CD14-positive monocyte (primary cell): ENCODE measurements at regions of chr5 and their contacts with region 1.

Region 1: GRCh38 chr5:543825-544674 is 19.8 kb upstream of the SLC9A3 start:
- DNase-seq: peak; percentile 88 to 93 (median 92)
- H3K4me3 ChIP-seq: peak overlapping the region in 1 of 3 experiments; percentile 26
- H3K4me3 Mint-ChIP-seq: peak overlapping the region; percentile 37 to 63
- H3K27ac ChIP-seq: peak overlapping the region; percentile 15 to 27
- H3K27ac Mint-ChIP-seq: peak overlapping the region in 6 of 7 donors; percentile 67 to 87 (median 82)
- H3K4me1 ChIP-seq: peaks cover 19 to 25% of the 10 kb centered on the region in 2 donors
- H3K4me1 Mint-ChIP-seq: peaks cover 31% of the 10 kb centered on the region
- H3K27me3 ChIP-seq: peaks cover 1 to 79% of the 10 kb centered on the region in 2 donors
- H3K27me3 Mint-ChIP-seq: peaks cover 51 to 86% (median 65%) of the 10 kb centered on the region in 3 donors
- CTCF ChIP-seq: no peak

Region 2: GRCh38 chr5:472656-473553 is 71.1 kb before region 1 on chr5:
- intact Hi-C with region 1: loop called in 1 of 2 experiments (anchors 10 kb)
- DNase-seq: peak; percentile 76 to 87 (median 77)
- H3K4me3 ChIP-seq: peak overlapping the region; percentile 51 to 87 (median 59)
- H3K4me3 Mint-ChIP-seq: peak overlapping the region; percentile 70 to 72
- H3K27ac ChIP-seq: peak overlapping the region in 1 of 2 donors; percentile 61
- H3K27ac Mint-ChIP-seq: no peak overlapping the region
- H3K4me1 ChIP-seq: peaks cover 22 to 40% of the 10 kb centered on the region in 2 donors
- H3K4me1 Mint-ChIP-seq: peaks cover 18% of the 10 kb centered on the region
- H3K27me3 ChIP-seq: peaks cover 4 to 31% of the 10 kb centered on the region in 2 donors
- H3K27me3 Mint-ChIP-seq: peaks cover 32 to 44% (median 43%) of the 10 kb centered on the region in 3 donors
- CTCF ChIP-seq: no peak

Region 3: GRCh38 chr5:485946-486491 is 58.0 kb before region 1 on chr5:
- intact Hi-C with region 1: no loop called
- DNase-seq: peak; percentile 53 to 72 (median 57)
- H3K4me3 ChIP-seq: no peak overlapping the region
- H3K4me3 Mint-ChIP-seq: peak overlapping the region in 1 of 2 donors; percentile 48
- H3K27ac ChIP-seq: no peak overlapping the region
- H3K27ac Mint-ChIP-seq: peak overlapping the region in 6 of 7 donors; percentile 13 to 85 (median 35)
- H3K4me1 ChIP-seq: peaks cover 2 to 12% of the 10 kb centered on the region in 2 donors
- H3K4me1 Mint-ChIP-seq: peaks cover 14% of the 10 kb centered on the region
- H3K27me3 ChIP-seq: peaks cover 3 to 28% of the 10 kb centered on the region in 2 donors
- H3K27me3 Mint-ChIP-seq: peaks cover 10 to 45% (median 15%) of the 10 kb centered on the region in 3 donors
- CTCF ChIP-seq: no peak